Ascending aorta (tissue), 2 donors: ENCODE measurements at regions of chr5 and their contacts with region 1.

Region 1: DNA sequence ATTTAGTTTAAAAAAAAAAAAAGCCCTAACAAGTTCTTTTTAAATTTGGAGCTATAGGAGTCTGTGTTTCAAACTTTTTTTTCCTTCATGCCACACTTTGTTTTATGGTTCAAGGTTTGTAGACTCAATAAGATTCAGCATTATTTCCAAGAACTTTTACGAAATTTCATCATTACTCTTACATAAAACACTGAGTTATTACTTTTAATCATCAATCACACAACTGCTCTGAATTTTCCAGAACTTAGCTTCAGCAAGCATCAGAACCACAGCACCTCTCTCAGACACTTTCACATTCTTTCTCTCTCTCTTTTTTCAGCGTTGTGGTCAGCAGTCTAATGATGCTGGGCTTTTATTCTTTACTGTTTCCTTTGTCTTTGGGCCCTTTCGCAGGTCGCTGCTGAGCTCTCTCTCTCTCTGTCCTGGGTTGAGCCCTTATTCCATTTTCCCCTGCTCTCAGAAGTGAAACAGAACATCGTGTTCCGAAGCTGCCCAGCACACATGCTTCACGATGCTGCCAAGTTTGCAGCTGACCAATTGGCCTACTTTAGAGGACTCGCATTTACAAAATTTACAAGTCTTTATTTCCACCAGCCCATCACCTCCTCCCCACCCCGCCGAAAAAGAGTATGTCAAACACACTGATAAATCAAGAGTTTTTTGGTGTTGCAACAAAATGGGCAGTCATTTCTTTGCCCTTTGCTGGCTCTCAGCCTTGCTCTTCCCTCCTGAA is 44.6 kb upstream of the PIK3R1 start:
- DNase-seq: peak; percentile 59 to 90
- H3K4me3 ChIP-seq: peak overlapping the region in 1 of 2 donors; percentile 25
- H3K27ac ChIP-seq: peak overlapping the region; percentile 70 to 79
- H3K4me1 ChIP-seq: peaks cover 3 to 19% of the 10 kb centered on the region in 2 donors
- H3K27me3 ChIP-seq: no peaks in the 10 kb centered on the region
- CTCF ChIP-seq: no peak

Region 2: DNA sequence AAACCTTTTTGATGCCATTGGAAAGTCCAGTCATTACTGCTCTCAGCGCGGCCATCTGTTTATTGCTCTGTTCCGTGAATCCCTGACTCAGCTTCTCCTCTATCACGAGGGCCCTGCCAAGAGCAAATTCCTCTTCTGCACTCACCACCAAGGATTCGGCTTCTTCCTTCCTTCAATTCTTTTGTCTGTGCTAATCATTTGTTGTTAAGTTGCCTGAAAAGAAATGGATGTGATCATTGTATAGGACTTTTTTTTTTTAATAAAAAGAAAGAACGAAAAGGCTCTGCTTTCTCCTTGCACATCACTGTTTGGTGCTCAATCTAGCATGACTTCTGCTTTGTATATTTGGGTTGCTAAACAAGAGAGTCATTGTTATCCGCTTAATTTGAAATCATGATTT is 84.1 kb before region 1 on chr5:
- intact Hi-C with region 1: no loop called
- DNase-seq: no peak
- H3K4me3 ChIP-seq: no peak overlapping the region
- H3K27ac ChIP-seq: no peak overlapping the region
- H3K4me1 ChIP-seq: peaks cover 0 to 3% of the 10 kb centered on the region in 2 donors
- H3K27me3 ChIP-seq: no peaks in the 10 kb centered on the region
- CTCF ChIP-seq: no peak

Region 3: GRCh38 chr5:68193481-68194036 is 22.6 kb after region 1 on chr5:
- intact Hi-C with region 1: loop called (anchors 1 kb)
- DNase-seq: no peak
- H3K4me3 ChIP-seq: no peak overlapping the region
- H3K27ac ChIP-seq: peak overlapping the region; percentile 75 to 76
- H3K4me1 ChIP-seq: peaks cover 0 to 25% of the 10 kb centered on the region in 2 donors
- H3K27me3 ChIP-seq: no peaks in the 10 kb centered on the region
- CTCF ChIP-seq: no peak

Region 4: DNA sequence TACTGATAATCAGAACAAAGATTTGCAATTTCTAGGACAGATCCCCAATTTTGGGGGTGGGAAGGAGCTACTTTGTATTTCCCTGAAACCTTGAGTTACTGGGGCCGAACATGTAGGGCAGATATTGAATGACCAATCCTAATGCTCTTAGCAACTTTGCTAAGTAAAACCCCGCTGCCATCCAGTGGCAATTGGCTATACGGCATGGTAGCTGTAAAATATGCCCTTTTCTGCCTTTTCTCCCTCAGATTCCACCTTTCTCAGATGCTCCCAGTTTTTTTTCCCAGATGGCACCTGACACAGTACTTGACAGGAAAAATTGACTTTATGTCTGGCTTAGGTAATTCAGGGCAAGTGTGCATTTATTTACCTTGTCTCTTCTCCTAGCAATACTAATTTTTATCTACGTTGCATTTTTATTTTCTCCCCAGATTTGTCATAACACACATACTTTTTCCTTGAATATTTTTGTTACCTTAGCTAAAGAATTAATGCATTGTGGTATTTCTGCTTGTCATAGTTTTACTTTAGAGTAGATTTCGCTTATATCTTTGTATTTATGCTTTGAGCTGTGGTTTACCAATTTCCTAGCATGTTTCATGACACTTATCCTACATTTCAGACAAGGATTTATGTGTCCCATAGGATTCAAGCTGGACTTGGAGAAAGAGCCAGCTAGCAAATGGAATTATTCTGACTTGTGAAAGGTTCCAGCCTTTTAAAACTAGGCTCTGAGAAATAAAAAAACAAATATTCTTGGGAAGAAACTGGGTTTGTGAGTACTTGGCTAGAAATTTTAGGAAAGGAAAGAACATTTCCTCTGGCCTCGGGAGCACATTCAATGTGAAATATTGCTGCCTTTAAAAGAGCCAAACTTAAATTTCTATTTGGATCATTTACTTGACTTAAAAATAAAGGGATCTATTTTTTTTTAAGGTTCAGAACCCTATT is 82.0 kb after region 1 on chr5:
- intact Hi-C with region 1: no loop called
- DNase-seq: peak in 1 of 2 donors; percentile 77
- H3K4me3 ChIP-seq: peak overlapping the region; percentile 17 to 37
- H3K27ac ChIP-seq: peak overlapping the region; percentile 66 to 77
- H3K4me1 ChIP-seq: peaks cover 15 to 85% of the 10 kb centered on the region in 2 donors
- H3K27me3 ChIP-seq: no peaks in the 10 kb centered on the region
- CTCF ChIP-seq: peak; percentile 69 to 84 (median 70)

Region 5: GRCh38 chr5:69334793-69335268 is 1163.8 kb after region 1 on chr5:
- intact Hi-C with region 1: no loop called
- DNase-seq: peak; percentile 13 to 92
- H3K4me3 ChIP-seq: peak overlapping the region in 1 of 2 donors; percentile 22
- H3K27ac ChIP-seq: no peak overlapping the region
- H3K4me1 ChIP-seq: peaks cover 0 to 9% of the 10 kb centered on the region in 2 donors
- H3K27me3 ChIP-seq: no peaks in the 10 kb centered on the region
- CTCF ChIP-seq: peak; percentile 61 to 86 (median 82)